PC-3 (cell line): ENCODE measurements at regions of chr20 and their contacts with region 1.

Region 1: GRCh38 chr20:3135507-3136070 is 24.1 kb downstream of the FASTKD5 start:
- DNase-seq: peak; percentile 35
- ATAC-seq: peak; percentile 56
- H3K4me3 ChIP-seq: no peak overlapping the region
- H3K27ac ChIP-seq: no peak overlapping the region
- H3K4me1 ChIP-seq: no peaks in the 10 kb centered on the region
- H3K27me3 ChIP-seq: no peaks in the 10 kb centered on the region
- CTCF ChIP-seq: no peak

Region 2: GRCh38 chr20:3115190-3116107 is 20.1 kb before region 1 on chr20:
- CTCF ChIA-PET with region 1: interaction called, 10 read pairs
- POLR2A ChIA-PET with region 1: interaction called, 3 read pairs
- intact Hi-C with region 1: no loop called
- DNase-seq: peak; percentile 76
- ATAC-seq: peak; percentile 54
- H3K4me3 ChIP-seq: no peak overlapping the region
- H3K27ac ChIP-seq: no peak overlapping the region
- H3K4me1 ChIP-seq: no peaks in the 10 kb centered on the region
- H3K27me3 ChIP-seq: no peaks in the 10 kb centered on the region
- CTCF ChIP-seq: peak; percentile 69

Region 3: GRCh38 chr20:3727401-3728021 is 591.9 kb after region 1 on chr20:
- CTCF ChIA-PET with region 1: no interaction called
- POLR2A ChIA-PET with region 1: no interaction called
- intact Hi-C with region 1: no loop called
- DNase-seq: peak; percentile 42
- ATAC-seq: peak; percentile 57
- H3K4me3 ChIP-seq: peak overlapping the region; percentile 47; the same call in 1 of the 2 replicates
- H3K27ac ChIP-seq: no peak overlapping the region
- H3K4me1 ChIP-seq: peaks cover 20% of the 10 kb centered on the region
- H3K27me3 ChIP-seq: no peaks in the 10 kb centered on the region
- CTCF ChIP-seq: no peak